ENCODE measurements at regions of chr11 and their contacts with region 1.

Region 1: DNA sequence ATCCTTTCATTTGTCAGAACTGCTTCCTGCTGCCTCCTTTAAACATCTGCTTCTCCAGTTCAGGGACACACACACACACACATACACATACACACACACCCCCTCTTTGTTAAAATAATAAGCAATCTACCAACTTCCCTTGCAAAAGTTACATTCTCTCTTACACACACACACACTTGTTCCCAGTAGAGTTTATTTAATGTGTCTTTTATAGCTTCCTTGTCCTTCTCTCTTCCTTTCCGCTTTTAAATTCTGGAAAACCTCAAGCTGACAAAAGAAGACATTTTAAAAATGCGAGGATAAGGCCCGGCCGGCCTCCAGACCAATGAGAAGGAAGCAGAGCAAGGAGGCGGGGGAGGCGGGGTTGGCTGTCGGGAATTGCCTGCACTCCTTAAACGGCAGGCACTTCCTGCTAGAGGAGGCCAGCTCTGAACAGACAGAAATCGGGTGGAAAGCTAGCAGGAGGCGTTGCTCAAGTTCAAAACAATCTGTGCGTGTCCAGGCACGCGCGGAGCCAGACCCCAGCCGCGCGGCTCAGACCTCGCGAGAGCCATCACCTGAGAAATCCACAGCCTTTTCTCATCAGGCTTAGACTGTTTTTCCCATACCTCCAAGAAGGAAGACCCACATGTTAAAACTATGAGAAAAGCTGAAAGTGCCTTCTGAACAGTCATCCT is 99.9 kb downstream of the MAML2 start:
- DNase-seq: peak; percentile 92
- ATAC-seq: peak; percentile 82
- H3K4me3 Mint-ChIP-seq: peak overlapping the region; percentile 73
- H3K27ac Mint-ChIP-seq: peak overlapping the region; percentile 94
- H3K4me1 Mint-ChIP-seq: peaks cover 62% of the 10 kb centered on the region
- H3K27me3 Mint-ChIP-seq: no peaks in the 10 kb centered on the region

Region 2: DNA sequence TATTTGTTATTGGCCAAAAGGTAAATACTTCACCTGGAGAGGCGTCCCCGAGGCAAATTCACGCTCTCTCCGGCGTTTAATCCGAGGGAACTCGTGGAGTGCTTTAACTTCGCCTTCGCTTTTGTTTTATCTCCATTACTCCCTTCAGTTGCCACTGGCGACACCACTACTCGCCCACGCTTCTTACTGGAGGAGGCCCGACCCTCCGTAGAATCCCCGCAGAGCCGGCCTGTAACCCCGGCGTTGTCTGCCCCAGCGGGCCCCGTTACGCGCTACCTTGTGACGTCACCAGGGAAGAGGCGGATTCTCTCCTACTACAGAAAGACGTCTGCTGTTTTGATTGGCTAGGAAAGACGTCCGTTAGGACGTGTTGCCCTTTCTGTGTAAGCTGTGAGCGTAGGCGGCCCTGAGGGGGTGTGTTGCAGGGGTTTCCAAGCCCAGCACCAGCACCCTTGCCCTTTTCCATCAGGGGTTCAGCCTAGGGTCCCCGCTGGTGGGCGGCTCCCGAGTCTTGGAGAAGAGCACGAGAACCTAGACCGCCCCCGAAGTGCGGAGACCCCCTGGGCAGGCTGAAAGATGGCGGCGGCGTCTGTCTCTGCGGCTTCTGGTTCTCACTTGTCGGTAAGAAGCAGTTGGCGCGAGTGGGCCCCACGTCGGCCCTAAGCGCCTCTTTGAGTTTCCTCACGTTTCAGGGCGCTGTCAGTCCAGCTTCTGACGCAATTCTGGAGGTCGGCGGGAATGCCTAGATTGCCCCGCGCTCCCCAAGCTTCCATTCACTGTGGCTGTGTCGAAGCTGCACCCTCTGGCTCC is 452.8 kb before region 1 on chr11 and contains the start of gene CEP57:
- CTCF ChIA-PET with region 1: no interaction called
- POLR2A ChIA-PET with region 1: no interaction called
- intact Hi-C with region 1: loop called in 1 of 2 experiments (anchors 5 kb)
- DNase-seq: peak; percentile 98
- ATAC-seq: peak; percentile 67
- H3K4me3 Mint-ChIP-seq: peak within 1 kb of the TSS; percentile 99
- H3K27ac Mint-ChIP-seq: peak within 1 kb of the TSS; percentile 100
- H3K4me1 Mint-ChIP-seq: peaks cover 53% of the 10 kb centered on the region
- H3K27me3 Mint-ChIP-seq: no peaks in the 10 kb centered on the region
- total RNA-seq, gene CEP57: 101 to 134 TPM

Region 3: GRCh38 chr11:95835768-95836488 is 407.2 kb before region 1 on chr11:
- CTCF ChIA-PET with region 1: no interaction called
- POLR2A ChIA-PET with region 1: no interaction called
- intact Hi-C with region 1: loop called (anchors 5 kb)
- DNase-seq: peak; percentile 69
- ATAC-seq: peak; percentile 87
- H3K4me3 Mint-ChIP-seq: no peak overlapping the region
- H3K27ac Mint-ChIP-seq: no peak overlapping the region
- H3K4me1 Mint-ChIP-seq: peaks cover 6% of the 10 kb centered on the region
- H3K27me3 Mint-ChIP-seq: no peaks in the 10 kb centered on the region

Region 4: GRCh38 chr11:96062134-96062533 is 181.0 kb before region 1 on chr11:
- CTCF ChIA-PET with region 1: interaction called, 3 read pairs
- POLR2A ChIA-PET with region 1: no interaction called
- intact Hi-C with region 1: loop called in 1 of 2 experiments (anchors 2 kb)
- DNase-seq: peak; percentile 65
- ATAC-seq: peak; percentile 87
- H3K4me3 Mint-ChIP-seq: peak overlapping the region; percentile 42
- H3K27ac Mint-ChIP-seq: peak overlapping the region; percentile 94
- H3K4me1 Mint-ChIP-seq: peaks cover 81% of the 10 kb centered on the region
- H3K27me3 Mint-ChIP-seq: no peaks in the 10 kb centered on the region

Region 5: GRCh38 chr11:96207459-96208449 is 35.4 kb before region 1 on chr11:
- CTCF ChIA-PET with region 1: interaction called, 7 read pairs
- POLR2A ChIA-PET with region 1: interaction called, 3 read pairs
- intact Hi-C with region 1: loop called in 1 of 2 experiments (anchors 2 kb)
- DNase-seq: peak; percentile 51
- ATAC-seq: peak; percentile 16
- H3K4me3 Mint-ChIP-seq: peak overlapping the region; percentile 51
- H3K27ac Mint-ChIP-seq: peak overlapping the region; percentile 95
- H3K4me1 Mint-ChIP-seq: peaks cover 93% of the 10 kb centered on the region
- H3K27me3 Mint-ChIP-seq: no peaks in the 10 kb centered on the region

Region 6: DNA sequence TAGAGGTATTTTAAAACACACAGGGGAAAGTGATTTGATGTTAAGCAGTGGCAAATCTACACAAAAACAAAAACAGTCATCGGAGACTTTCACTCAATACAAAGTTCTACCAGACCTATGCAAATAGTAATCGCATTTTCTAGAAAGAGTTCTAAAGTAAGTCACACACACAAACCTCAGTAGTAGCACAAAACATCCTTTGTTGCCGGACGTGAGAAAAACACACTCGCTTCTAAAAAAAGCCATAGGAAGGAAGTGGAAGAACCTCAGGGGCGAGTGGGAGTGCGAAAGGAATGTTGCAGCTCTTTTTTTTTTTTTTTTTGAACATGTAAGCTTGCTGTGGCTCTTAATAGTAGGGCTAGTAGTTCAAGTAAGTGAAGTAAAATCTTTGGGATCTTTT is 11.0 kb after region 1 on chr11:
- CTCF ChIA-PET with region 1: interaction called, 10 read pairs
- POLR2A ChIA-PET with region 1: no interaction called
- intact Hi-C with region 1: no loop called
- DNase-seq: peak; percentile 42
- ATAC-seq: peak; percentile 37
- H3K4me3 Mint-ChIP-seq: peak overlapping the region; percentile 53
- H3K27ac Mint-ChIP-seq: peak overlapping the region; percentile 88
- H3K4me1 Mint-ChIP-seq: peaks cover 89% of the 10 kb centered on the region
- H3K27me3 Mint-ChIP-seq: no peaks in the 10 kb centered on the region

Region 7: DNA sequence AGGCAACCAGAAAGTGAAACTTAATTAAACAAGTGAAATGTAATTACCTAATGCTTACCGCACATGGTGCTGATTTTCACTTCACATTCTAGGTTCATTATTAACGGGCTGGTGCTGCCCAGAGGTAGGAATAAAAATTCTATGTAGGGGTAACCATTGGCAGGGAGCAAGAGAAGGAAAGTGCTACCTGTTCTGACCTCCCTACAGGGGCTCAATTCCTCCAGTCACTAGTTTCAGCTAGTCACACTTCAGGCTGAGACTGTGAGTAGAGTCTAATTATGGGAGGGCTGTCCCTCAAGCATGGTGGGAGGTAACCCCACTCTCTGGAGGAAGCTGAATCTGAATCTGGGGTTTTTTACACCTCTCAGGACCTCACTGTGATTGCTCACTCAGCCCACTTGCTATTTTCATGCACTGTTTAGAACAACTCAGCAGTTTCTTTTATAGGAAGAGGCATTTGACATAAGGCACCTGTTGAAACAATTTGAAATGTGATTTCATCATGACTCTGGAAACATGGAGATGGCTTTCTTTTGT is 24.5 kb after region 1 on chr11:
- CTCF ChIA-PET with region 1: interaction called, 5 read pairs
- POLR2A ChIA-PET with region 1: interaction called, 4 read pairs
- intact Hi-C with region 1: loop called in 1 of 2 experiments (anchors 2 kb)
- DNase-seq: peak; percentile 69
- ATAC-seq: peak; percentile 94
- H3K4me3 Mint-ChIP-seq: peak overlapping the region; percentile 20
- H3K27ac Mint-ChIP-seq: peak overlapping the region; percentile 93
- H3K4me1 Mint-ChIP-seq: peaks cover 82% of the 10 kb centered on the region
- H3K27me3 Mint-ChIP-seq: no peaks in the 10 kb centered on the region

Region 8: DNA sequence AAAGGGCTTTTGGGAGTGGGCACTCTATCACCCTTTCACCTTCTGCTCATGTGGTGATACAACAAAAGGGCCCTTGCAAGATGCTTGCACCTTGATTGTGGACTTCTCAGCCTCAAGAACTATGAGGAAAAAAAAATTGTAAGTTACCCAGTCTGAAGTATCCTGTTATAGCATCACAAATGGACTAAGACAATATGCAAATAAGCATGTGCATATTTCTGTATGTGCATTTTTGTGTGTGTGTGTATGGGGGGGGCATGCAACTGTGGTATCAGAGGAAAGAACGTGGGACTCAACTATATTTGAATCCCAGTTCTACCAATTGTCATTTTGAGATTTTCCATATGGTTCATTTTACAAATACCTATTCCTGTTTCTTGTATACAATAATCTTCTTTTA is 157.6 kb after region 1 on chr11:
- CTCF ChIA-PET with region 1: no interaction called
- POLR2A ChIA-PET with region 1: no interaction called
- intact Hi-C with region 1: no loop called
- DNase-seq: no peak
- ATAC-seq: no peak
- H3K4me3 Mint-ChIP-seq: no peak overlapping the region
- H3K27ac Mint-ChIP-seq: no peak overlapping the region
- H3K4me1 Mint-ChIP-seq: peaks cover 7% of the 10 kb centered on the region
- H3K27me3 Mint-ChIP-seq: peaks cover 2% of the 10 kb centered on the region

Measured in activated CD4-positive, alpha-beta T cell treated with anti-CD3 and anti-CD28 coated beads for 36 hours (primary cell).